H1 (cell line): ENCODE measurements at regions of chr1 and their contacts with region 1.

Region 1: DNA sequence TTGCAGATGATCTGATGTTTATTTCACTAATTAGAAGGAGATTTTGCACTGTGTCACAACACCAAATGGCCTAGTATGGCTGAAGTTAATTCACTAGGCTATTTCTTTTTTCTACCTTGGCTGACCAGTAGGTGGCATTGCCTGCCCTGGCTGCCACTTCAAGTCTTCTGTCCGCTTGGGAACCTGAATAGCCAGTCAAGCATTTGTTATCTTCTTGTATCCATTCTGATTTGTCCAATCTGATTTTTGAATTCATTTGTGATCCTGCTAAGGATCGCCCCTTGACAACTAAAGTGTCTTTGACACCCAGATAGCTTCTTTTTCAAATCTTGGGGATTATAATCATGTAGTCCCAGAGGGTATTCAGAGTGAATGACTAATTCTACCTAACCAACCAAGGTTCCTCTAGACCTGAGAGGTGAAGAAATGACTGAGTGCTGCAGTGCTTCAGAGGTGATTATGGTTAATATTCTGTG is 99.4 kb downstream of the GIPC2 start:
- DNase-seq: no peak
- H3K4me3 ChIP-seq: no peak overlapping the region
- H3K27ac ChIP-seq: no peak overlapping the region
- H3K4me1 ChIP-seq: no peaks in the 10 kb centered on the region
- H3K27me3 ChIP-seq: no peaks in the 10 kb centered on the region
- CTCF ChIP-seq: peak; percentile 70 to 85 (median 80)
- EP300 ChIP-seq: no peak
- POLR2A ChIP-seq: no peak
- RAD21 ChIP-seq: peak; percentile 97 to 98

Region 2: GRCh38 chr1:78019018-78019417 is 126.1 kb before region 1 on chr1:
- CTCF ChIA-PET with region 1: no interaction called
- POLR2A ChIA-PET with region 1: no interaction called
- DNase-seq: no peak
- H3K4me3 ChIP-seq: no peak overlapping the region
- H3K27ac ChIP-seq: no peak overlapping the region
- H3K4me1 ChIP-seq: 0 out of 7 replicates have a peak, but pooled peaks cover 0 to 2% (median 0%) of the 10 kb centered on the region in 4 experiments
- H3K27me3 ChIP-seq: no peaks in the 10 kb centered on the region
- CTCF ChIP-seq: no peak
- EP300 ChIP-seq: no peak
- POLR2A ChIP-seq: no peak
- RAD21 ChIP-seq: no peak

Region 3: GRCh38 chr1:78045926-78046778 is 99.0 kb before region 1 on chr1 and contains the start of gene GIPC2:
- CTCF ChIA-PET with region 1: no interaction called
- POLR2A ChIA-PET with region 1: no interaction called
- DNase-seq: peak in 1 of 2 experiments; percentile 76
- H3K4me3 ChIP-seq: peak within 1 kb of the TSS; percentile 62 to 73 (median 70)
- H3K27ac ChIP-seq: no peak within 1 kb of the TSS
- H3K4me1 ChIP-seq: peaks cover 0 to 9% (median 6%) of the 10 kb centered on the region in 4 experiments; a peak in 3 of 7 replicates
- H3K27me3 ChIP-seq: peaks cover 4 to 28% (median 24%) of the 10 kb centered on the region in 4 experiments
- CTCF ChIP-seq: no peak
- EP300 ChIP-seq: no peak
- POLR2A ChIP-seq: peak in 1 of 2 experiments; percentile 63; a peak in 2 of 3 replicates
- RAD21 ChIP-seq: no peak
- total RNA-seq, gene GIPC2: 0.69 and 1.9 TPM in 2 replicates

Region 4: DNA sequence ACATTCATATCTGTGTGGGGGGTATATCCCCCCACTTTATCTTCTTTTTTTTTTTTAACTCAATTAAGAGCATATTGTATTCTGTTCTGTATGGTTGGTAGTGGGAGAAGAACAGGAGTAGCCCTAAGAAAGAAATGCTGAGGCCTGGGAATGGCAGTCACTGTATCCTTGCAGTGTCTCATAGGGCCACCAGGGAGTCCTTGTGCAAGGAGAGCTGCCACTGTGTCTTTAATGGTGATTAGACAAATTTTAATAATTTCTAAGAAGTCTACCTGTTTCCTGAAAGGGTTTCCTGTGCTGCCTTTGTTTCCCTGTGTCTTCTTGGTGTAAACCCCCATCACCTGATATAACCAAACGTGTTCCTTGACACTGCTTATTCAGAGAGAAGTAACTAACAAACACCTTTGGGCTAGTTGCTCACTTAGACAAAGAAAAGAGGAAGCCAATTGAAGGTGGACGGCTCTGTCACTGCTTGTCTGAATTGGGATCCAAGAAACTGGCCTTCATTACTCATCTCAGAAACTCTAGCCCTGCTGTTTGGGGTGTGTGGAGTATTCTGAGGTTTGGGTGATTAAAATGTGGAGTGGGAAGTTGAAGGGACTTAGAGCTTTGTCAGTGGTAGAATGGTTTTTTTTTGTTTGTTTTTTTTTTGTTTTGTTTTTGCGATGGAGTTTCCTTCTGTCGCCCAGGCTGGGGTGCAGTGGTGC is 84.1 kb before region 1 on chr1:
- CTCF ChIA-PET with region 1: no interaction called
- POLR2A ChIA-PET with region 1: no interaction called
- DNase-seq: no peak
- H3K4me3 ChIP-seq: no peak overlapping the region
- H3K27ac ChIP-seq: no peak overlapping the region
- H3K4me1 ChIP-seq: no peaks in the 10 kb centered on the region
- H3K27me3 ChIP-seq: no peaks in the 10 kb centered on the region
- CTCF ChIP-seq: peak in 1 of 3 experiments; percentile 14; a peak in 1 of 4 replicates
- EP300 ChIP-seq: no peak
- POLR2A ChIP-seq: no peak
- RAD21 ChIP-seq: no peak

Region 5: GRCh38 chr1:78132174-78132947 is 12.8 kb before region 1 on chr1:
- CTCF ChIA-PET with region 1: interaction called, 48 read pairs
- POLR2A ChIA-PET with region 1: no interaction called
- DNase-seq: no peak
- H3K4me3 ChIP-seq: no peak overlapping the region
- H3K27ac ChIP-seq: no peak overlapping the region
- H3K4me1 ChIP-seq: no peaks in the 10 kb centered on the region
- H3K27me3 ChIP-seq: no peaks in the 10 kb centered on the region
- CTCF ChIP-seq: no peak
- EP300 ChIP-seq: no peak
- POLR2A ChIP-seq: no peak
- RAD21 ChIP-seq: no peak

Region 6: DNA sequence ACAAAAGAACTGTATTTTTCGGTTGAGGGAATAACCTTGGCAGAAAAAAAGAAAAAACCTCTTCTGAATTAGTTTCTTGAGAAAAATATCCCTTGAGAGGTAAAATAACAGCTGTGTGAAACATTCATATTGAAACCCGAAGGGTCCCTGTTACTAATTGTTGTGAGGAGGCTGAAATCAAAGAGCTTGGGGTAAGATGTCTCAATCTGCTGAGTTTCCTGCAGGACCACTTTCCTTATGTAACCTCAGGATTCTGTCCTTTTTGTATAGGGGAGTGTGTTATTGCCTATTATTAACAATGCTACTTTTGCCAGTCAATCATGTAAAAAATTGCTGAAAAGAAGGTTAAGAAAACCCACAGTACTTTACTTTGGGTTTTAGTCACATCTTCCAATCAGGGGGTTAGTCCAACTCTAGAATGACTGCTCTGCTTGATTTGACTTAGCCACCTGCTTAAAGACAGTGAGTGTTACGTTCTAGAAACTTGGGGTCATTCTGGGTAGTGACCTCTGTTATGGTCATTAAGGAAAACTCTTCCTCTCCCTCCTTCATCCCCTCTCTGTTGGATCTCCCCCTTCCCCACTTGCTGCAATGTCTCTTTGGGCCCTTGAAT is 39.4 kb after region 1 on chr1:
- CTCF ChIA-PET with region 1: no interaction called
- POLR2A ChIA-PET with region 1: no interaction called
- DNase-seq: no peak
- H3K4me3 ChIP-seq: no peak overlapping the region
- H3K27ac ChIP-seq: no peak overlapping the region
- H3K4me1 ChIP-seq: no peaks in the 10 kb centered on the region
- H3K27me3 ChIP-seq: no peaks in the 10 kb centered on the region
- CTCF ChIP-seq: no peak
- EP300 ChIP-seq: no peak
- POLR2A ChIP-seq: no peak
- RAD21 ChIP-seq: no peak

Region 7: DNA sequence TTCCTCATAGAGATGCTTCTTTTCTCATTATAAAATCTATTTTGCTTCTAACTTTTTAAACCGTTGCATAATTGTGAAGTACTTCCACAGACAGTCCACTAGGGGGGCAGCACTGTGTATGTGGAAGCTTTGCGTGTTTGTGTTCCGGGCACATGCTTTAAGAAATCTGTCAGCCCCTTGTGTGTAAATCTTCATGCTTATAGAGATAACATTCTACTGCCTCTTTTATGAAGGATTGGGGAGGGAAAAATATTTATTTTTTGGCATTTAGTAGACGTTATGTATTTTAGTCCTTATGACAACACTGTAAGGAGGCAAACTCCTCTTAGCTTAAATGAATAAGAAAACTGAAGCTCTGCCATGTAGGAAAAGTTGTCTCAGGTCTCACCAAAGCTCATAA is 188.4 kb after region 1 on chr1:
- CTCF ChIA-PET with region 1: interaction called, 21 read pairs
- POLR2A ChIA-PET with region 1: no interaction called
- DNase-seq: no peak
- H3K4me3 ChIP-seq: no peak overlapping the region
- H3K27ac ChIP-seq: no peak overlapping the region
- H3K4me1 ChIP-seq: no peaks in the 10 kb centered on the region
- H3K27me3 ChIP-seq: no peaks in the 10 kb centered on the region
- CTCF ChIP-seq: peak; percentile 38 to 65 (median 57)
- EP300 ChIP-seq: no peak
- POLR2A ChIP-seq: no peak
- RAD21 ChIP-seq: peak; percentile 50 to 54

Region 8: GRCh38 chr1:78553859-78554258 is 408.7 kb after region 1 on chr1:
- CTCF ChIA-PET with region 1: interaction called, 12 read pairs
- POLR2A ChIA-PET with region 1: no interaction called
- DNase-seq: no peak
- H3K4me3 ChIP-seq: no peak overlapping the region
- H3K27ac ChIP-seq: no peak overlapping the region
- H3K4me1 ChIP-seq: no peaks in the 10 kb centered on the region
- H3K27me3 ChIP-seq: no peaks in the 10 kb centered on the region
- CTCF ChIP-seq: peak; percentile 10 to 64 (median 55)
- EP300 ChIP-seq: no peak
- POLR2A ChIP-seq: no peak
- RAD21 ChIP-seq: peak; percentile 70 to 76

Region 9: DNA sequence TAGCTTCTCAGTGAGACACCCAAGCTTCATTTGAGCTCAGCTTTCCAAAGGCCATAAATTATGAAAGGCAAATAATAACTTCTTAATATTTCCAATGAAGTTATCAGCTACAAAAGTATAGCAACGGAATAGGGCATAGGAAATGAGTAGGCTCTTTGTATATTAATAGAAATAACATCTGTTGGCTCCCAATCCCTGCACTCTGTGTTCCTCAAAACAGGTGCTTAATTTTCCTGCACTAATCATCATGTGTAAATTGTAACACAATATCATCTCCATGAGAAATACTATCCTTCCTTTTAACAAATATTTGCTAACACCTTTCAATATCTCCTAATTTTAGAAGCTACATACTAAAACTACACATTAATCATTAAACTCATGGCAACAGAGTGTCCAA is 455.9 kb after region 1 on chr1:
- CTCF ChIA-PET with region 1: interaction called, 32 read pairs
- POLR2A ChIA-PET with region 1: no interaction called
- DNase-seq: no peak
- H3K4me3 ChIP-seq: no peak overlapping the region
- H3K27ac ChIP-seq: no peak overlapping the region
- H3K4me1 ChIP-seq: no peaks in the 10 kb centered on the region; a peak in 1 of 7 replicates
- H3K27me3 ChIP-seq: no peaks in the 10 kb centered on the region
- CTCF ChIP-seq: no peak
- EP300 ChIP-seq: no peak
- POLR2A ChIP-seq: no peak
- RAD21 ChIP-seq: no peak